ENCODE measurements at regions of chr1 and their contacts with region 1.

Region 1: DNA sequence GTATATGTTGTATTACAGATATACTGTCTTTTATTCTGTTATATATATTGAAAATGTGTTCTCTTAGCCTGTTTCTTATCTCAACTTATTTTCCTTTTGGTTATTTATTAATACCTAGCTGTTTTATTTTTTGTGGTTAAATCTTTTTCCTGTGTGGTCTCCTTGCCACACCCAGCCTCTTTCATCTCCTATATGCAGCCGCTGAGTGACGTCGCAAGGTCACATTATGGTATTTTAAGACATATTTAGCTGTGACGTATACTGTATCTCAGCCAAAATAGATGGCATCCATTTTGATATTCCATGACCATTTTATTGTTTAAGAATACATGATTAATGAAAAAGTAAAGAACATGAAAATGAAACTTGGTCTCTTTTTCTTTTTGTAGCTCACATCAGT is 29.1 kb downstream of the CENPF start:
- DNase-seq: no peak
- ATAC-seq: no peak
- H3K4me3 Mint-ChIP-seq: no peak overlapping the region
- H3K27ac Mint-ChIP-seq: no peak overlapping the region
- H3K4me1 Mint-ChIP-seq: peaks cover 4% of the 10 kb centered on the region
- H3K27me3 Mint-ChIP-seq: no peaks in the 10 kb centered on the region
- CTCF ChIP-seq: no peak

Region 2: GRCh38 chr1:214187121-214187900 is 444.8 kb before region 1 on chr1:
- CTCF ChIA-PET with region 1: no interaction called
- POLR2A ChIA-PET with region 1: no interaction called
- intact Hi-C with region 1: no loop called
- DNase-seq: no peak
- ATAC-seq: no peak
- H3K4me3 Mint-ChIP-seq: no peak overlapping the region
- H3K27ac Mint-ChIP-seq: no peak overlapping the region
- H3K4me1 Mint-ChIP-seq: peaks cover 2% of the 10 kb centered on the region
- H3K27me3 Mint-ChIP-seq: peaks cover 50% of the 10 kb centered on the region
- CTCF ChIP-seq: no peak

Region 3: GRCh38 chr1:214292322-214292721 is 339.8 kb before region 1 on chr1:
- CTCF ChIA-PET with region 1: no interaction called
- POLR2A ChIA-PET with region 1: no interaction called
- intact Hi-C with region 1: no loop called
- DNase-seq: no peak
- ATAC-seq: no peak
- H3K4me3 Mint-ChIP-seq: no peak overlapping the region
- H3K27ac Mint-ChIP-seq: no peak overlapping the region
- H3K4me1 Mint-ChIP-seq: peaks cover 1% of the 10 kb centered on the region
- H3K27me3 Mint-ChIP-seq: no peaks in the 10 kb centered on the region
- CTCF ChIP-seq: no peak

Region 4: DNA sequence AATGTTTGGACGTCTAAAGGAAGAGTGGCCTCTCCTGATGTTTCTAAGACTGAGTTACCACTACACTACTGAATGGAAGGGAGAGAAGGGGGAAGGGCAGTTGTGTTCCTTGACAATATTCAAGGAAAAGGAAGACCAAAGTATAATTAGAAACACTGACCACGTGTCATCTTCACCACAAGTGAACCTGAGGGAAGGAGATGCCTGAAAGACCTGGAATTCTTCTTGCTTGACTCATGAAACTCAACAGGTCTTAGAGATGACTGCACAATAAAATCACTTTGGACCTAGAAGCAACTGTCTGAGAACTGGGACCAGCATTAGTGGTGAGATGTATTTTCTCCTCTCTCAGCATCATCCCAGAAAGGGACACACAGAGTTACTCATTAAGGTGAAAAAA is 137.4 kb before region 1 on chr1:
- CTCF ChIA-PET with region 1: no interaction called
- POLR2A ChIA-PET with region 1: no interaction called
- intact Hi-C with region 1: no loop called
- DNase-seq: no peak
- ATAC-seq: no peak
- H3K4me3 Mint-ChIP-seq: no peak overlapping the region
- H3K27ac Mint-ChIP-seq: no peak overlapping the region
- H3K4me1 Mint-ChIP-seq: no peaks in the 10 kb centered on the region
- H3K27me3 Mint-ChIP-seq: no peaks in the 10 kb centered on the region
- CTCF ChIP-seq: no peak

Region 5: GRCh38 chr1:215606564-215607168 is 974.6 kb after region 1 on chr1:
- CTCF ChIA-PET with region 1: no interaction called
- POLR2A ChIA-PET with region 1: no interaction called
- intact Hi-C with region 1: loop called (anchors 5 kb)
- DNase-seq: no peak
- ATAC-seq: no peak
- H3K4me3 Mint-ChIP-seq: no peak overlapping the region
- H3K27ac Mint-ChIP-seq: no peak overlapping the region
- H3K4me1 Mint-ChIP-seq: no peaks in the 10 kb centered on the region
- H3K27me3 Mint-ChIP-seq: no peaks in the 10 kb centered on the region
- CTCF ChIP-seq: peak; percentile 23

Measured in activated B cell treated with CpG ODN at 0.5 μM for 24 hours (primary cell).